Lower leg skin (tissue), 4 donors: ENCODE measurements at regions of chr7 and their contacts with region 1.

Region 1: GRCh38 chr7:142782922-142783900 is 12.4 kb downstream of the PRSS2 start:
- DNase-seq: peak; percentile 86 to 97
- H3K4me3 ChIP-seq: no peak overlapping the region
- CTCF ChIP-seq: peak in 1 of 3 donors; percentile 79
- POLR2A ChIP-seq: no peak

Region 2: GRCh38 chr7:142482891-142483658 is 300.1 kb before region 1 on chr7:
- intact Hi-C with region 1: loop called (anchors 10 kb)
- DNase-seq: no peak
- H3K4me3 ChIP-seq: no peak overlapping the region
- CTCF ChIP-seq: no peak
- POLR2A ChIP-seq: no peak